Activated naive CD4-positive, alpha-beta T cell treated with anti-CD3 and anti-CD28 coated beads for 36 hours (primary cell): ENCODE measurements at regions of chr3 and their contacts with region 1.

Region 1: DNA sequence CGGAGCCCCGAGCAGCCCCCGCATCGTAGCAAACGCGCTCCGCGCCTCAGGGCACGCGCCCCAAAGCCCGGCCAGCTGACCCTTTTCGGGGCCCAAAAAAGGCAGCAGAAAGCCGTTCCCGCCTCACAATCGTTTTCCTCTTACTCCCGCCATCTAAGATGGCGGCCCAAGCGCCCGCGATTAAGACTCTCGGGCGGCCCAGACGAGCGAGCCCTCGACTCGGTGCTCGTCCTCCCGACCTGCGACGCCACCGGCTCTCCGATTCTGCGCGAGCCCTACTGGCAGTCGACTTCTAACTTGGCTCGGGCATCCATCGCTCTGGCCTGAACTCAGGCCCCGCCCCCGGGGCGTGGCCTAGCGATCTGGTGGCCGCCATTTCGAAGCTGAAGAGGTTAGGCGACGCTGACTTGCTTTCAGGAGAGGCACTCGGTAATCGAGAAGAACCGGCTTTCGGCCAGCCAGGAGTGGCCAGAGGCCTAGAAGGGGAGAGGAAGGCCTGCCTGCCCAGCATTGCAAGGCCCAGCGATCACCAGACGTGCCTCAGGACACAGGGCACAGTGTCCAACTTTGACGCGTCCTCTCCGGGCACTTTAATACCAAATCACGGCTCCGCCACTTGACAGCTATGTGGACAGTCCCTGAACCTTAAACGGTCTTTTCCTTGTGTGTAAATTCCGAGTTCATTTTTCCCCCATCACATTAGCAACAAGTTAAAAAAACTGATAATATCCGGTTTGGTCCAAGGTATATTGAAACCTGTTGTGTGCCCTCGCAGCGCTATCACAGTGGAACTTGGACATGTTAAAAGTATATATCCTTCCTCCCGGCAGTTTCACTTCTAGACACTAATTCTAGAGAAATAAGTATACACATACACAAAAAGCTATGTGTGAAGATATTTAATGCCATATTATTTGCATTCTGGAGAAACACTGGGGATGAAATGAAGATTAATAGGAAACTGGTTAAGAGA is at the start of gene RAF1:
- DNase-seq: peak; percentile 98
- H3K4me3 Mint-ChIP-seq: peak within 1 kb of the TSS; percentile 82
- H3K27ac Mint-ChIP-seq: peak within 1 kb of the TSS; percentile 98
- H3K4me1 Mint-ChIP-seq: peaks cover 28% of the 10 kb centered on the region
- H3K27me3 Mint-ChIP-seq: no peaks in the 10 kb centered on the region
- total RNA-seq, gene RAF1: 62.5 to 68.5 TPM

Region 2: GRCh38 chr3:11271986-11272904 is 1392.0 kb before region 1 on chr3 and contains the start of gene ATG7:
- CTCF ChIA-PET with region 1: no interaction called
- intact Hi-C with region 1: loop called (anchors 5 kb)
- DNase-seq: peak; percentile 97
- H3K4me3 Mint-ChIP-seq: peak within 1 kb of the TSS; percentile 93
- H3K27ac Mint-ChIP-seq: peak within 1 kb of the TSS; percentile 93
- H3K4me1 Mint-ChIP-seq: peaks cover 43% of the 10 kb centered on the region
- H3K27me3 Mint-ChIP-seq: no peaks in the 10 kb centered on the region
- total RNA-seq, gene ATG7: 25.9 to 27.0 TPM

Region 3: DNA sequence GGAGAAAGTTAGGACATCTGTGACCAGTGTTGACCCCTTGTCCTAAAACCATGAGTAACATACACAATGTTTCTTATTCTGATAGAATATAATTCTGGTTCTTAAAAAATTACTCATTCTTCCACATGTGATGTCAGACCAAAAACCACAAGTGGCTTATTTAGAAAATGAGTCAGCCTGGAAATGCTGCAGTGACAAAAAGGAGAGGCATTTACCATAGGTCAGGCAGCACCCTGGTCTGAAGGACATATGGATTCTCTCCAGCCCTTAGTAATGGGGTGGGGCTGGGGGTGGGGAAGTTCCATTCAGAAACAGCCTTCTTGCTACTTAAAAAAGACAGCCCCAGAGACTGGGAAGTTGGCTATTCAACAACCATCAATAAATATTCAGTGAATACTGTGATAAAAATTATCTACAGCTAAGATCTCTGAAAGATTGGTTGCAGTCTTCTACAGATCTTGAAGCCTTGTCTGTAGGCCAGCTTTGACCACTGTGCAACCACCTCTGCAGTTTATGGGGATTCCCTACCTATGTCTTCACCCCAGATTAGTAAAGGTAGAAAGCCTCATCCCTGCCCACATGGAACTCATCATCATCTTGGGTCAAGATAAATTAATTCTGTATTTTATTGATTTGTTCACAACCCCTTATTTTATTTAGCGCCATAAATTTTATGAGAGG is 470.6 kb before region 1 on chr3:
- CTCF ChIA-PET with region 1: no interaction called
- intact Hi-C with region 1: loop called (anchors 5 kb)
- DNase-seq: peak; percentile 62
- H3K4me3 Mint-ChIP-seq: no peak overlapping the region
- H3K27ac Mint-ChIP-seq: peak overlapping the region; percentile 84
- H3K4me1 Mint-ChIP-seq: peaks cover 41% of the 10 kb centered on the region
- H3K27me3 Mint-ChIP-seq: peaks cover 3% of the 10 kb centered on the region

Region 4: GRCh38 chr3:12405432-12406272 is 258.6 kb before region 1 on chr3:
- CTCF ChIA-PET with region 1: no interaction called
- intact Hi-C with region 1: no loop called
- DNase-seq: no peak
- H3K4me3 Mint-ChIP-seq: no peak overlapping the region
- H3K27ac Mint-ChIP-seq: no peak overlapping the region
- H3K4me1 Mint-ChIP-seq: peaks cover 6% of the 10 kb centered on the region
- H3K27me3 Mint-ChIP-seq: peaks cover 17% of the 10 kb centered on the region

Region 5: DNA sequence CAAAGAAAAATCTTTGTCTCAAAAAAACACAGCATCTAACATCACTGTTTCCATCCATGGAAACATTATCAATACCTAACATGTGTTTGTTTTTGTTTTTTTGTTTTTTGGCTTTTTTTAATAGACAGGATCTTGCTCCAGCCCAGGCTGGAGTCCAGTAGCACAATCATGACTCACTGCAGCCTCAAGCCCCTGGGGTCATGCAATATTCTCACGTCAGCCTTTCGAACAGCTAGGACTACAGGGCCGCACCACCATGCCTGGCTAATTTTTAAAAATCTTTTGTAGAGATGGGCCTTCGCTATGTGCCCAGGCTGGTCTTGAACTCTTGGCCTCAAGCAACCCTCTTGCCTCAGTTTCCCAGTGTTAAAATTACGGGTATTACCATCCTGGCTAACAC is 53.1 kb before region 1 on chr3:
- CTCF ChIA-PET with region 1: interaction called, 3 read pairs
- intact Hi-C with region 1: loop called (anchors 1 kb)
- DNase-seq: no peak
- H3K4me3 Mint-ChIP-seq: no peak overlapping the region
- H3K27ac Mint-ChIP-seq: no peak overlapping the region
- H3K4me1 Mint-ChIP-seq: peaks cover 45% of the 10 kb centered on the region
- H3K27me3 Mint-ChIP-seq: no peaks in the 10 kb centered on the region

Region 6: GRCh38 chr3:12719984-12720898 is 56.0 kb after region 1 on chr3:
- CTCF ChIA-PET with region 1: interaction called, 4 read pairs
- intact Hi-C with region 1: loop called (anchors 1 kb)
- DNase-seq: peak; percentile 83
- H3K4me3 Mint-ChIP-seq: peak overlapping the region; percentile 56
- H3K27ac Mint-ChIP-seq: no peak overlapping the region
- H3K4me1 Mint-ChIP-seq: peaks cover 9% of the 10 kb centered on the region
- H3K27me3 Mint-ChIP-seq: no peaks in the 10 kb centered on the region

Region 7: DNA sequence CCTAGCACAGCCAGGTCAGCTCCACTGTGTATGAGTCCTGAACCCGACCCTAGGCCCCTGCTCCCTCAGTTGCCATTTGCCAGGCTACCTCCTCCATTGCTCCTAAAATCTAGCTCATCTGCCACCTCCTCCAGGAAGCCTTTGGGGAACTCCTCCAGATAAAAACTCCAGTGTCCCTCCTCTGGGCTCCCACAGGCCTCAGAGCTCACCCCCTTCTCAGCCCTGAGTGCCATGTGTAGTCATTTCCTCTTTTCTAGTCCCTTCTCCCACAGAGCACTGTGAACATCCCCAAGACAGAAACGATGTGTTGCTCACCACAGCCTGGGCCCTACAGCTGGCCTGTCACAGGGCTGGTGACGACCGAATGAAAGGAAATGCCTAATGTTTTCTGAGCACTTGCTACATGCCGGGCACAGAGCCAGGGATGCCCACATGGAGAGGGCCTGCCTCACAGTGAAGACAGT is 348.0 kb after region 1 on chr3:
- CTCF ChIA-PET with region 1: no interaction called
- intact Hi-C with region 1: loop called (anchors 5 kb)
- DNase-seq: peak; percentile 88
- H3K4me3 Mint-ChIP-seq: peak overlapping the region; percentile 65
- H3K27ac Mint-ChIP-seq: peak overlapping the region; percentile 97
- H3K4me1 Mint-ChIP-seq: peaks cover 80% of the 10 kb centered on the region
- H3K27me3 Mint-ChIP-seq: no peaks in the 10 kb centered on the region